ENCODE measurements at regions of chr1 and their contacts with region 1.

Region 1: DNA sequence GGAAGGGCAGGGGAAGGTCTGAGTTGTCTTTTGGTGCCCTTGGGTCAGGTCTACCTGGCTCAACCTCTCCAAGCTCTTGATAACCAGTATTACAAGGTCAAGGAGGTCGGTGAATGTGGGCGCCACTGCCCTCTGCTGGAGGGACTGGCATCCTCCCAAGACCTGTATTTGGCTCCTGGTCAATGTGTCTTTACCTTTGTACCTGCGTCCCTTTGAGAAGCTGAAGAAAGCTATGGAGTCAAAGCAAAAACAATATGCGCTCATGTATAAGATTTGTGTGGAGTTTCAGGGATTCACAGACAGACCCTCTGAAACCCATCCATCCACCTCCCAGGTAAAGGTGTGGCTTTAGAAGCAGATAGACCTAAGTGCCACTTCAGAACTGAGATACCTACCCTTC is 61.8 kb upstream of the NBL1 start:
- DNase-seq: peak; percentile 72 to 84 (median 75)
- ATAC-seq: peak; percentile 94
- H3K4me3 ChIP-seq: no peak overlapping the region
- H3K27ac ChIP-seq: no peak overlapping the region
- H3K4me1 ChIP-seq: peaks cover 0 to 2% of the 10 kb centered on the region in 2 experiments; a peak in 1 of 5 replicates
- H3K27me3 ChIP-seq: peaks cover 7 to 14% of the 10 kb centered on the region in 2 experiments; a peak in 4 of 5 replicates
- CTCF ChIP-seq: peak; percentile 87 to 93 (median 88)
- EP300 ChIP-seq: no peak
- POLR2A ChIP-seq: no peak
- RAD21 ChIP-seq: peak; percentile 72 to 95

Region 2: GRCh38 chr1:19044975-19045831 is 537.1 kb before region 1 on chr1:
- CTCF ChIA-PET with region 1: no interaction called
- POLR2A ChIA-PET with region 1: no interaction called
- in situ Hi-C with region 1: no loop called
- intact Hi-C with region 1: no loop called
- DNase-seq: no peak
- ATAC-seq: peak; percentile 65
- H3K4me3 ChIP-seq: no peak overlapping the region
- H3K27ac ChIP-seq: no peak overlapping the region
- H3K4me1 ChIP-seq: no peaks in the 10 kb centered on the region; a peak in 1 of 5 replicates
- H3K27me3 ChIP-seq: peaks cover 64 to 85% of the 10 kb centered on the region in 2 experiments
- CTCF ChIP-seq: no peak
- EP300 ChIP-seq: no peak
- POLR2A ChIP-seq: no peak
- RAD21 ChIP-seq: no peak

Region 3: DNA sequence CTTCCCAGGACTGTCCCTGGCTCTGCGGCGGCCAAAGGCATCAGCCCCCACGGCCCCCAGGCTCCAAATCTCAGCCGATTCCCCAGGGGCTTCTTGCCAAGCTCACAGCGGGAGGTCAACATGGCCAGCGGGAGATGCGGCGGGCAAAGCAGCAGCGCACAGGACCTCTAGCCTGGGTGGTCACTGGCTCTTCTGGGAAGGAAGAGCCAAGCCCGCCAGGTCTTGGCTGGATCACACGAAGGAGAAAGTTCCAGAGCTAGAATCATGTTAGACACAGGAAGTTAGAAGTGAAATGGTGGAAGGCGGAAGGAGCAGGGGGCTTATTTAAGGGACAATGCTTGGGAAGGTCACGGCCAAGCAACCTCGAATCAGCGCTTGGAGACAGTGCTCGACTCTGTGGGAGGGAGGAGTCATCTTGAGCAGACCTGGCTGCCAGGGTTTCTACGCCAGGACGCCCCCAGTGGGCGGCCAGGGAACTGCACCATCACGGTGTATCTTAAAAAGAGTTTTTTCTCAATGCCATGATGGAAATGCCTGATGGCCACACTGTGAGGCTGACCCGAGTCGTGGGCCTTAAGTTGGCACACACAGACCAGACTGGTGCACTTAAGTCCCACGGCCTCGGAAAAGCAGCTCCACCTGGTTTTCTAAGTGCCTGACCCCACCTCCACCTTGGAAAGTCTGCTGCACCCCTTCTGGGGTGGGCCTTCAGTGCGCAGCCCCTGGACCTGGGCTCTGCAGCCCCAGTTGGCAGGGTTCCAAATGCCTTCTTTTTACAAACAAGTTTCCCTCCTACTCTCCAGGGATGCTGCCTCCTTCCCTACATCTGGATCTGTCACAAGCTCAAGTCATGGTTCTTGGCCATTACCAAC is 240.9 kb before region 1 on chr1:
- CTCF ChIA-PET with region 1: interaction called, 5 read pairs
- POLR2A ChIA-PET with region 1: no interaction called
- in situ Hi-C with region 1: no loop called
- intact Hi-C with region 1: loop called (anchors 5 kb)
- DNase-seq: peak; percentile 90 to 92 (median 91)
- ATAC-seq: peak; percentile 88
- H3K4me3 ChIP-seq: no peak overlapping the region
- H3K27ac ChIP-seq: peak overlapping the region; percentile 6; the same call in 1 of the 3 replicates
- H3K4me1 ChIP-seq: peaks cover 4 to 52% of the 10 kb centered on the region in 2 experiments; a peak in 4 of 5 replicates
- H3K27me3 ChIP-seq: no peaks in the 10 kb centered on the region
- CTCF ChIP-seq: peak; percentile 91 to 99 (median 96)
- EP300 ChIP-seq: no peak
- POLR2A ChIP-seq: no peak
- RAD21 ChIP-seq: peak; percentile 42 to 72

Region 4: DNA sequence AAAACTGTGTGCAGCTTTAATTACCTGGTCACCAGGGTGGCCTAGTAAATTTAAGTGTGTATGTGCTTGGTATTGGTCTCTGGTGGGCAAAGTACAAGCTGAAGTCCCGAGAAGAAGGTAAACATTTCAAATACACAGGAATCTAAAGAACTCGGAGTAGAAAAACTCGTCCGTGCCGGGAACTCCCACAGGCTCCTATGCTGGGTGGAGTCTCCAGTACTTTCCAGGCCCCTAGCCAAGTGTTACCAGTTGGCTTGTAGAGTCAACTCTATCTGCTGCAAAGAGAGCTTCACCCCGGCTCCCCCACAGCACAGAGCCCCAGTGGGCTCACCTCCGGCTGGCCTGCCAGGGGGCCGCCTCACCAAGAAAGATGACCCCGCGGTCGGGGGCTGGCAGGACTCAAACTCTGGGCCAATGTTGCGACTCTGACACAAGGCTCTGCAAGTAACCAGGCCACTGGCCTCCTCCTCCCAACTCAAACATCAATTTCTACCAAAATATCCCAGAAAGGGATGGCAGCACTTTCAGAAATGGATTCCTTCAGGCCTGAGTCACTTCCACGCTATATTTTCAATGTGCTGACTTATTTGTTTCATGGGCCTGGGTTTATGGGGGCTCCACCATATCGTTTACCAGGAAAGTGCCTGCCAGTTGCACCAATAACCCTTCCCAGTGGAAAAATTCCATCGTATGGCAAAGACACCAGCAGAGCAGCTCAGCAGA is 196.3 kb before region 1 on chr1:
- CTCF ChIA-PET with region 1: interaction called, 9 read pairs
- POLR2A ChIA-PET with region 1: no interaction called
- in situ Hi-C with region 1: loop called (anchors 5 kb)
- intact Hi-C with region 1: loop called (anchors 5 kb)
- DNase-seq: no peak
- ATAC-seq: no peak
- H3K4me3 ChIP-seq: no peak overlapping the region
- H3K27ac ChIP-seq: no peak overlapping the region
- H3K4me1 ChIP-seq: peaks cover 9 to 15% of the 10 kb centered on the region in 2 experiments; a peak in 4 of 5 replicates
- H3K27me3 ChIP-seq: no peaks in the 10 kb centered on the region
- CTCF ChIP-seq: no peak
- EP300 ChIP-seq: no peak
- POLR2A ChIP-seq: no peak
- RAD21 ChIP-seq: no peak

Region 5: GRCh38 chr1:19390901-19391595 is 191.3 kb before region 1 on chr1:
- CTCF ChIA-PET with region 1: interaction called, 9 read pairs
- POLR2A ChIA-PET with region 1: interaction called, 3 read pairs
- in situ Hi-C with region 1: loop called (anchors 5 kb)
- intact Hi-C with region 1: loop called (anchors 5 kb)
- DNase-seq: peak; percentile 60 to 77 (median 68)
- ATAC-seq: peak; percentile 84
- H3K4me3 ChIP-seq: no peak overlapping the region; the same call in 1 of the 2 replicates
- H3K27ac ChIP-seq: peak overlapping the region; percentile 69
- H3K4me1 ChIP-seq: peaks cover 22 to 31% of the 10 kb centered on the region in 2 experiments
- H3K27me3 ChIP-seq: no peaks in the 10 kb centered on the region
- CTCF ChIP-seq: peak; percentile 83 to 96 (median 95)
- EP300 ChIP-seq: peak; percentile 61
- POLR2A ChIP-seq: no peak
- RAD21 ChIP-seq: peak; percentile 79 to 85

Region 6: DNA sequence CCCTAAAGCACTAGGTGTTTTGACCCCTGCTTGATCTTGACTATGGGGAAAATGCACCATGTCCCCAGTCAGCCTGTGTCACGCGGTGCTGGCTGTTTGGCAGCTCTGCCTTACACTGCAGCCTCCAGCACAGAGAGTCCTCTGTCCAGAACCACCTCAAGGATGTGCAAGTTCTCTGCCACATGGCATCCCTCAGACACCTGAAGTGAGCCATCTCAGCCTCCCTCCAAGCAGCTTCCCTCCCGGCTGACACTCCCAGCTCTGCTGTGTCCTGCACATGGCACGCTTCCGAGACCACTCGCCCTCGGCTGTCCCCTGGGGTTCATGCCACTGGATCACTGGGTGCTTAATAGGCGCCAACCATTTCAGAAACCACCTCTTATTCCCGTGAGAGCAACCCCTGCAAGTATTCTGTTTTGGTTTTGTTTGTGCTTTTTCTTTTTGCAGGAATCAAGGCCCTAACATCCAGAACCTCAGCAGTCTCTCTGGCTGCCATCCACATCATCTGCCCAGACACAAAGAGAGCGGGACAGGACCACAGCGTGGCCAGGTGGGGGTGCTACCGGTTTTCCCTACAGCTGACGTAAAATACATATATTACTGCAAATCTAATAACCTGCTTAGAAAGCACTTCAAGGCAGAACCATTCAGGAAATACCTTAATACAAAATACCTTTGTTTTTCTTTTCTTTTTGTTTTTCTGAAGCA is 142.7 kb before region 1 on chr1:
- CTCF ChIA-PET with region 1: interaction called, 10 read pairs
- POLR2A ChIA-PET with region 1: interaction called, 3 read pairs
- in situ Hi-C with region 1: no loop called
- intact Hi-C with region 1: no loop called
- DNase-seq: peak; percentile 48 to 65 (median 64)
- ATAC-seq: peak; percentile 78
- H3K4me3 ChIP-seq: no peak overlapping the region
- H3K27ac ChIP-seq: no peak overlapping the region
- H3K4me1 ChIP-seq: peaks cover 15 to 20% of the 10 kb centered on the region in 2 experiments
- H3K27me3 ChIP-seq: no peaks in the 10 kb centered on the region
- CTCF ChIP-seq: peak; percentile 52 to 74 (median 70)
- EP300 ChIP-seq: no peak
- POLR2A ChIP-seq: no peak
- RAD21 ChIP-seq: peak; percentile 24 to 74; a peak in 2 of 4 replicates

Region 7: DNA sequence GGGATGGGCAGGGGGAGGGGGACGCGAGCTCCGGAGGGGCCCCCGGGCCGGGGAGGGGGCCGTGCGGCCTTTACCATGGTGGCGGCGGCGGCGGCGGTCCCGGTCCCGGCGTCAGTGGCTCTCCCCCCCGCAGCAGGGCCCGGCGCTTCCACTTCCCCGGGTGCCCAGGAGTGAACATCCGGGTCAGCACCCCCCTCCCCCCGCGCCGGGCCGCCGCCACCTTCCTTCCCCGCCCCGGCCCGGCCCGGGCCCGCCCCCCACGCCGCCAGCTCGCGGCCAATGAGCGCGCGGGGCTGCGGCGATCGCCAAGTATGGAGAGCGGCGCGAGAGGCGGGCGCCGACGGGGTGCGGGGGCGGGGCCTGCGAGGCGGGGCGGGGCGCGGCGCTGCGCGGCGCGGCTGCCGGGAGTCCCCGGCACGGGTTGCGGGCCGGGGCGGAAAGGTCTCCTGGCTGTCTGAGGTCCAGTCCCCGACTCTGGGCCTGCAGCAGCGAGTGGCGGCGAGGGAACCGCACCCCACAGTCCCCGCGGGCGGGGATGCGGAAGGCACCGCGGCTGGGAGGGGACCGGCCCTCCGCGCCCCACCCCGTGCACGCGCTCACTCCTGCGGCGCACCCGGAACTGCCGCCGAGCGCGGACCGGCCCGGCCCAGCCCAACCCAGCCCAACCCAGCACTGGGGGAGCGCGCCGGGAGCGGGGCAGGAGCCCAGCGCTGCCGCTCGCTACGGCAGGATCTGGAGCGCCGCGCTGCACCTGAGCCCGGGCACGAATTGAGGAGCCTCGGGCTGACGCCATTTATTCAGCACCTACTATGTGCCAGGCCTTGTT is 96.7 kb before region 1 on chr1 and contains the start of gene CAPZB:
- CTCF ChIA-PET with region 1: no interaction called
- POLR2A ChIA-PET with region 1: no interaction called
- in situ Hi-C with region 1: no loop called
- intact Hi-C with region 1: loop called (anchors 2 kb)
- DNase-seq: peak; percentile 96 to 99 (median 98)
- ATAC-seq: peak; percentile 92
- H3K4me3 ChIP-seq: peak within 1 kb of the TSS; percentile 92
- H3K27ac ChIP-seq: peak within 1 kb of the TSS; percentile 97
- H3K4me1 ChIP-seq: peaks cover 34 to 38% of the 10 kb centered on the region in 2 experiments
- H3K27me3 ChIP-seq: no peaks in the 10 kb centered on the region
- CTCF ChIP-seq: 0 out of 6 replicates have a peak, but pooled peaks of 1 of the 3 experiments have one; percentile 7
- EP300 ChIP-seq: no peak
- POLR2A ChIP-seq: peak; percentile 87
- RAD21 ChIP-seq: peak in 1 of 2 experiments; percentile 15; a peak in 2 of 4 replicates
- polyA plus RNA-seq, gene CAPZB: 70.0 to 115 TPM